Calu3 (cell line): ENCODE measurements at regions of chr3 and their contacts with region 1.

Region 1: GRCh38 chr3:69181592-69182211 is 59.3 kb upstream of the LMOD3 start:
- DNase-seq: peak; percentile 64
- H3K4me3 Mint-ChIP-seq: peak overlapping the region; percentile 48
- H3K27ac Mint-ChIP-seq: peak overlapping the region; percentile 97
- H3K4me1 Mint-ChIP-seq: peaks cover 48% of the 10 kb centered on the region
- H3K27me3 Mint-ChIP-seq: no peaks in the 10 kb centered on the region
- CTCF ChIP-seq: no peak

Region 2: GRCh38 chr3:69200384-69201068 is 18.8 kb after region 1 on chr3:
- CTCF ChIA-PET with region 1: interaction called, 12 read pairs
- intact Hi-C with region 1: loop called (anchors 1 kb)
- DNase-seq: peak; percentile 61
- H3K4me3 Mint-ChIP-seq: peak overlapping the region; percentile 77
- H3K27ac Mint-ChIP-seq: peak overlapping the region; percentile 95
- H3K4me1 Mint-ChIP-seq: peaks cover 44% of the 10 kb centered on the region
- H3K27me3 Mint-ChIP-seq: no peaks in the 10 kb centered on the region
- CTCF ChIP-seq: no peak

Region 3: GRCh38 chr3:69212411-69213139 is 30.9 kb after region 1 on chr3:
- CTCF ChIA-PET with region 1: interaction called, 9 read pairs
- intact Hi-C with region 1: loop called (anchors 5 kb)
- DNase-seq: peak; percentile 43
- H3K4me3 Mint-ChIP-seq: no peak overlapping the region
- H3K27ac Mint-ChIP-seq: peak overlapping the region; percentile 99
- H3K4me1 Mint-ChIP-seq: peaks cover 32% of the 10 kb centered on the region
- H3K27me3 Mint-ChIP-seq: no peaks in the 10 kb centered on the region
- CTCF ChIP-seq: no peak

Region 4: DNA sequence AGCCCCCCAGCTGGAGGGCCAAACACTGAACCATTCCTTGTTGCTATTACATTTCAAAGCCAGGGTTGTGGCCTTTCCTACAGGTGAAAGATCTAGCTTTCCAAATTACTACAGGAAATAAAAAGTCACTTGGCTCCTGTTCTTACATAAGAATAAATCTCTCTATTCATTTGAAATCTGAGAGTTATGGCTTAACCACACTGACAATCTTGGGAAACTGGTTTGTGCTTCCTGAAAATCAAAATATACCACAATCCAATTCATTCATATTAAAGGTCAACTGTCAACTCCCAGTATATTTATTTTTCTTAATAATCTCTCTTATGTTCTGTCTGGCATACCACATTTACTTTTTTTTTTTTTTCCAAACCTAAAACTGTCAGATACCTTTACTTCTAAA is 44.4 kb after region 1 on chr3:
- CTCF ChIA-PET with region 1: interaction called, 9 read pairs
- intact Hi-C with region 1: loop called (anchors 5 kb)
- DNase-seq: no peak
- H3K4me3 Mint-ChIP-seq: peak overlapping the region; percentile 33
- H3K27ac Mint-ChIP-seq: peak overlapping the region; percentile 73
- H3K4me1 Mint-ChIP-seq: peaks cover 45% of the 10 kb centered on the region
- H3K27me3 Mint-ChIP-seq: no peaks in the 10 kb centered on the region
- CTCF ChIP-seq: no peak

Region 5: DNA sequence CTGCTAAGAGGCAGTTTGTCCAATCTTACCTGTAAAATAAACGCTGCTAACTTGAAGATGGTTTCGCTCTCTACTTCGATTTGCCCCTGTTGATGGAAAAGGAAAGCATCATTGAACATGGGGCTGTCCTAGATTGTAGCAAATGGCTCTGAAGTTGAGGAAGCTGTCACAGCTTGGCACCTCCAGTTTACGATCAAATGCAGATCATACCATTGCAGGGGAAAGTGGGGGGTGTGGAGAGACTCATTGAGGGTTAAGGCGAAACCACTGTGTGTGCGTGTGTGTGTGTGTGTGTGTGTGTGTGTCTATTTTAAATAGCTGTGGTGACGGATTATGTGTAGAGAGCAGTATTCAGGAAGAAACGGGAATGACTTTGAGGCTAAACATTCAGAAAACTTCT is 68.3 kb after region 1 on chr3:
- CTCF ChIA-PET with region 1: interaction called, 4 read pairs
- intact Hi-C with region 1: loop called (anchors 2 kb)
- DNase-seq: peak; percentile 78
- H3K4me3 Mint-ChIP-seq: peak overlapping the region; percentile 83
- H3K27ac Mint-ChIP-seq: peak overlapping the region; percentile 85
- H3K4me1 Mint-ChIP-seq: peaks cover 50% of the 10 kb centered on the region
- H3K27me3 Mint-ChIP-seq: no peaks in the 10 kb centered on the region
- CTCF ChIP-seq: no peak